ENCODE measurements at regions of chr6 and their contacts with region 1.

Region 1: DNA sequence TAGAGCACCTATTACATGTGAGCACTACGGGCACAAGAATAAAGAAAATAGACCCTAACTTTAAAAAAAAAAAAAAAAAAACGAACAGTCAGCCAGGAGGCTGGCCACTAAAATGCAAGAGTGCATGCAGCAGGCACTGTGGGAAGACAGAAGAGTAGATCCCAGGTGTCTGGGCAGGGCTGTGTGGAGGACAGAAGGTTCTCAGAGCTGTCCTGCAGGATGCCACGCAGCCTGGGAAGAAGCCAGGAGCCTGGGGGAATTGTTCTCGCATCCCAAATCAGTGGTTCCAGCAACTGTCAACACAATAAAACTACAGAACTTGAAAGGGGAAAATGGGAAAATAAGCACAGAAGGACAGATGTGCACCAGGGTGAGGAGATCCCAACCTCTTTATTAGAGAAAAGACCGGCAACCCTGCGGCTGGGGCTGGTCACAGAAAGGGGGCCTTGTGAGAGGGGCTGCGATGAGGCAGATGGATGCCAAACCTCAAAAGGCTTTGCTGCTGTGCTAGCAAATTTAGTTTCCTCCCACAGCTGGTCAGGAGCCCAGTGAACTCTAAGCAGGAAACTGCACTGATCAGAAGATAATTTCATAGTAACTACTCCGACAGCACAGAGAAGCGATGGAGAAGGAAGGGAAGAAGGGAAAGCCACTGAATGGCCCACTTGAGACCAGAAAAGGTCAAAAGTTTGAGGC is 30.9 kb downstream of the MAP3K5 start:
- DNase-seq: no peak
- ATAC-seq: peak; percentile 25
- H3K4me3 ChIP-seq: peak overlapping the region; percentile 61
- H3K27ac ChIP-seq: peak overlapping the region; percentile 97
- H3K4me1 ChIP-seq: peaks cover 61% of the 10 kb centered on the region
- H3K27me3 ChIP-seq: no peaks in the 10 kb centered on the region
- CTCF ChIP-seq: no peak
- EP300 ChIP-seq: 0 out of 4 replicates have a peak, but pooled peaks of 1 of the 2 experiments have one; percentile 33
- POLR2A ChIP-seq: 0 out of 2 replicates have a peak, but pooled peaks have one; percentile 32
- RAD21 ChIP-seq: no peak

Region 2: DNA sequence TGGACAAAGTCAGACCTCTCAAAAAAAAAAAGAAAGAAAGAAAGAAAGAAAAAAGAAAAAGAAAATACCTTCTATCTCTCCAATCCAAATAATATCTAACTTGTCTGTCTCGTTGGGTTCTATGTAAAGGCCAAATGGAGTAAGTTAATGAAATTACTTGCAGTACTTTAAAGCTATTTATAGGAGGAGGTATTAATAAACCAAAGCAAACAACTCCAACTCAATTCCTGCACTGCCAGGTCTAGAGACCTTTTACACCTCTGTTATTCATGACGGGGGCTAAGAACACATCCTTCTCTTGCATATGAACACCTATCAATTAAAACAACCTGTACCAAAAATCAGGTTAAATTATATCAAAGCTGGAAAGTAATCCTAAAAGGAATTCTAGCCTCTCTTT is 49.7 kb before region 1 on chr6:
- CTCF ChIA-PET with region 1: interaction called, 63 read pairs
- POLR2A ChIA-PET with region 1: interaction called, 163 read pairs
- RAD21 ChIA-PET with region 1: interaction called, 246 read pairs
- SMC1A ChIA-PET with region 1: interaction called, 268 read pairs
- in situ Hi-C with region 1: no loop called
- intact Hi-C with region 1: no loop called
- DNase-seq: no peak
- ATAC-seq: no peak
- H3K4me3 ChIP-seq: no peak overlapping the region
- H3K27ac ChIP-seq: no peak overlapping the region
- H3K4me1 ChIP-seq: peaks cover 17% of the 10 kb centered on the region
- H3K27me3 ChIP-seq: no peaks in the 10 kb centered on the region
- CTCF ChIP-seq: no peak
- EP300 ChIP-seq: no peak
- POLR2A ChIP-seq: no peak
- RAD21 ChIP-seq: no peak

Region 3: GRCh38 chr6:136728976-136729515 is 32.3 kb before region 1 on chr6:
- CTCF ChIA-PET with region 1: interaction called, 6 read pairs
- POLR2A ChIA-PET with region 1: interaction called, 16 read pairs
- RAD21 ChIA-PET with region 1: interaction called, 58 read pairs
- SMC1A ChIA-PET with region 1: interaction called, 268 read pairs
- in situ Hi-C with region 1: no loop called
- intact Hi-C with region 1: no loop called
- DNase-seq: no peak
- ATAC-seq: no peak
- H3K4me3 ChIP-seq: no peak overlapping the region
- H3K27ac ChIP-seq: no peak overlapping the region
- H3K4me1 ChIP-seq: peaks cover 25% of the 10 kb centered on the region
- H3K27me3 ChIP-seq: no peaks in the 10 kb centered on the region
- CTCF ChIP-seq: no peak
- EP300 ChIP-seq: no peak
- POLR2A ChIP-seq: no peak
- RAD21 ChIP-seq: no peak

Region 4: GRCh38 chr6:136745300-136745699 is 16.1 kb before region 1 on chr6:
- CTCF ChIA-PET with region 1: interaction called, 10 read pairs
- POLR2A ChIA-PET with region 1: interaction called, 8 read pairs
- RAD21 ChIA-PET with region 1: interaction called, 59 read pairs
- SMC1A ChIA-PET with region 1: interaction called, 90 read pairs
- in situ Hi-C with region 1: no loop called
- intact Hi-C with region 1: no loop called
- DNase-seq: no peak
- ATAC-seq: no peak
- H3K4me3 ChIP-seq: no peak overlapping the region
- H3K27ac ChIP-seq: no peak overlapping the region
- H3K4me1 ChIP-seq: peaks cover 24% of the 10 kb centered on the region
- H3K27me3 ChIP-seq: no peaks in the 10 kb centered on the region
- CTCF ChIP-seq: no peak
- EP300 ChIP-seq: no peak
- POLR2A ChIP-seq: no peak
- RAD21 ChIP-seq: no peak

Region 5: DNA sequence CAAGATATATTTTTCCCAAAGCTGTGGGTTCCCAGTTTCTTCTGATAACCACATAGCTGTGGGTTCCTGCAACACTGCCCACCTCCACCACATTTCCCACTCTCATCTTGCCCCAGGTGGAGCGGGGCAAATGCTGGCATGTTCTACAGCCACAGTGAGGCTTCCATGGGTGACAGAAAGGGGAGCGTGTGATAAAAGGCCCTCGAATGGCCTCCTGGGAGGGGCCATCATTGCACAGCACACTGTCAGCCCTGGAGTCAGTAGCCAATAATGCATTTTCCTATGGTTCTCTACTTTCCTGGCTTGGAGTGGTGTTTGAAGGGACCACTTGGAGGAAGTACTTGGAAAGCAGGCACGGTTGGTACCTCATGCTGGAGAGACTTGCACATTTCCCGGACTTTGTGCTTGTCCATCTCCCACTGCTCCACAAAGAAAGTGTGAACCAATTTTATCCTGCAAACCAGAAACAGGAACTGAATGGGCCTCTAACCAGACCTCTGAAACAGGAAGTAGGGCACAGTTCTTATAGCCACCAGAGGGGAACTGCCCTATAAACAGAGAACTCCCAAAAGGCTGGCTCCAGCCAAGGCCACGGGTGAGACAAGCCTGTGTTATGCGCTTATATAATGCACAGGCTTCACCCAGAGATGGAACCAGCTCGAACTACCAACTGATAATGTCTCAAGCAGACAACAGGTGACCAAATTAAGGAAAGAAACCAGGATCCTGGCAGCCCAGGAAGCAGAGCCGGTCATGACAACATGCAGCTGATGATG is 22.3 kb after region 1 on chr6:
- CTCF ChIA-PET with region 1: interaction called, 107 read pairs
- POLR2A ChIA-PET with region 1: interaction called, 252 read pairs
- RAD21 ChIA-PET with region 1: interaction called, 363 read pairs
- SMC1A ChIA-PET with region 1: interaction called, 368 read pairs
- in situ Hi-C with region 1: no loop called
- intact Hi-C with region 1: loop called (anchors 1 kb)
- DNase-seq: no peak
- ATAC-seq: peak; percentile 75
- H3K4me3 ChIP-seq: peak overlapping the region; percentile 76
- H3K27ac ChIP-seq: peak overlapping the region; percentile 92
- H3K4me1 ChIP-seq: peaks cover 27% of the 10 kb centered on the region
- H3K27me3 ChIP-seq: no peaks in the 10 kb centered on the region
- CTCF ChIP-seq: peak in 2 of 3 experiments; percentile 18 to 34; a peak in 1 of 6 replicates
- EP300 ChIP-seq: peak in 1 of 2 experiments; percentile 59; a peak in 1 of 4 replicates
- POLR2A ChIP-seq: peak; percentile 33; the same call in 1 of the 2 replicates
- RAD21 ChIP-seq: no peak

Region 6: DNA sequence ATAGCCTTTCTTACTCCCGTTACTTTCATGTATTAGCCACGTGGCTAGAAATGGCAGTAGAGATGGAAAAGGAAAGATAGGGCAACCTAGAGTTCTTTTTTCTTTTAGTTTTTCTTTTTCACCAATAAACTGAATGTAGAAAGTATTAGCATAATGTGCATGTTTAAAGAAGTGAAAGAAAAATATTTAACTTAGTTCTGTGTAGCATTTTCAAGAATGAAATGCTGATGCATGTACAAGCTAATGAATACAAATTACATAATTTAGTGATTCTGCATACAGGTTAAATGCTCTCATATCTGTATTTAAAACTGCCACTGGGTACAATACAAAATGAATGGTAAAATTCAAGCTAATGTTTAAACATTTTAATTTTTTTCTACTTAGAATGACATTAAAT is 306.0 kb after region 1 on chr6:
- CTCF ChIA-PET with region 1: no interaction called
- POLR2A ChIA-PET with region 1: no interaction called
- RAD21 ChIA-PET with region 1: no interaction called
- SMC1A ChIA-PET with region 1: no interaction called
- in situ Hi-C with region 1: no loop called
- intact Hi-C with region 1: no loop called
- DNase-seq: no peak
- ATAC-seq: no peak
- H3K4me3 ChIP-seq: no peak overlapping the region
- H3K27ac ChIP-seq: no peak overlapping the region
- H3K4me1 ChIP-seq: no peaks in the 10 kb centered on the region
- H3K27me3 ChIP-seq: no peaks in the 10 kb centered on the region; a peak in 1 of 4 replicates
- CTCF ChIP-seq: no peak
- EP300 ChIP-seq: no peak
- POLR2A ChIP-seq: no peak
- RAD21 ChIP-seq: no peak